ENCODE measurements at regions of chr11 and their contacts with region 1.

Region 1: DNA sequence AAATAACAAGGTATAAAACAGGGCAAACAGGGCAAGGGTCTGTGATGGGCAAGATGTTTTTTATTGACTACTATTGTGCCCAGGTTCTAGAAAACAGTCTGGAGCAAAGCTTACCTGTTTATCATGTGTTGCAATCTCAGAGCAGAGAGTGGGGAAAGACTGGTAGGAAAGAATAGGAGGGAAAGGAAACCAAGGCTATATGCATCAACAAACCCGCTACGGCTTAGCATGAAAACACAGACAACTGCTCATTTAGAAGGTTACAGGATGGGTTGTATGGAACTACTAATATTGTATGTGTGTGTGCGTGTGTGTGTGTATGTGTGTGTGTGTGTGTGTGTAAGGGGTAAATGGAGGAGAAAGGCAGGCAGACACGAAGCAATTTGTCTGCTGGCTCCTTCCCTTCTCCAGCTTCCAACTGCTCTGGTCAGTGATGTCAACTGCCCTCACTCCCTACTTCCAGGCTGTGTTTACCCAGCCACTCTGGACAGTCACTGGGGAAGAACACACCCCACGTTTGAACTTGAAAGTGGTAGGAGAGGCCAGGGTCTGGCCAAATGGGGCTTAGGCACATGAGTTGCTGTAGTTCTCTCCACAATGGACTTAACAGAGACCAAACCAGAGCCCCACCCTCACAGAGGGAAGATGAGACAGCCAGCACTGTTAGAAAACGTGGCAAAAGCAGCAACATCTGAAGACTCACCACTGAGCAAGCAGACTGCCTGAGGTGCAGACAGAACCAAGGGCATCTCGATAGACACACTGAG is 47.0 kb downstream of the GAB2 start:
- H3K4me3 Mint-ChIP-seq: no peak overlapping the region
- H3K27ac Mint-ChIP-seq: peak overlapping the region; percentile 71
- H3K4me1 Mint-ChIP-seq: peaks cover 59% of the 10 kb centered on the region
- H3K27me3 Mint-ChIP-seq: no peaks in the 10 kb centered on the region

Region 2: GRCh38 chr11:78325274-78325781 is 45.3 kb before region 1 on chr11:
- intact Hi-C with region 1: no loop called
- H3K4me3 Mint-ChIP-seq: no peak overlapping the region
- H3K27ac Mint-ChIP-seq: no peak overlapping the region
- H3K4me1 Mint-ChIP-seq: peaks cover 85% of the 10 kb centered on the region
- H3K27me3 Mint-ChIP-seq: no peaks in the 10 kb centered on the region

Region 3: DNA sequence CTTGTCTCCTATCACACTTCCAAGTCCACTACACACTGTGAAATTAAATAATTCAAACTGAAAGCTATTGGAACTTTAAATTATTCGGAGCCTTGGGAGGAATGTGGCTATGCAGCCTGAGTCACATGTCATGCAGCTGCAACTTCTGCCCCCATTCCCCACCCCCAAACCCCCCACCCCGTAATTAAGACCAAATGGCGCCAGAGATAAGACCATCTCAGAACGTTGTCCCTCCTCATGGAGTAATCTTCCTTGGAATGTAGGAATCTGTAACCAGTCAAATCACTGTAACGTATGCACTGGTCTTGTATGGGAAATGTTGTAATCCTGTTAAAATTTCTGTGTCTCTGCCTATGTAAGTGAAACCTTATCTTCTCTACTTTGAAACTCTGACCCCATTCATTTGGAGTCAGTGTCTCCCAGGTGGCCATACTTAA is 10.0 kb after region 1 on chr11:
- intact Hi-C with region 1: no loop called
- H3K4me3 Mint-ChIP-seq: peak overlapping the region; percentile 67
- H3K27ac Mint-ChIP-seq: peak overlapping the region; percentile 79
- H3K4me1 Mint-ChIP-seq: peaks cover 72% of the 10 kb centered on the region
- H3K27me3 Mint-ChIP-seq: no peaks in the 10 kb centered on the region

Region 4: GRCh38 chr11:78406538-78407196 is 36.1 kb after region 1 on chr11:
- intact Hi-C with region 1: loop called (anchors 5 kb)
- H3K4me3 Mint-ChIP-seq: no peak overlapping the region
- H3K27ac Mint-ChIP-seq: peak overlapping the region; percentile 74
- H3K4me1 Mint-ChIP-seq: peaks cover 59% of the 10 kb centered on the region
- H3K27me3 Mint-ChIP-seq: no peaks in the 10 kb centered on the region

Measured in dendritic cell treated with granulocyte-macrophage colony-stimulating factor and Interleukin-4, amounts not matched to agents 40 ng/mL and 50 ng/mL, for 4 days (primary cell).